Mammary epithelial cell (primary cell): ENCODE measurements at regions of chr17 and their contacts with region 1.

Region 1: GRCh38 chr17:49227436-49228261 is 2.9 kb downstream of the PHOSPHO1 start:
- DNase-seq: peak; percentile 48
- H3K4me3 ChIP-seq: no peak overlapping the region
- H3K27ac ChIP-seq: no peak overlapping the region
- H3K4me1 ChIP-seq: peaks cover 14% of the 10 kb centered on the region
- H3K27me3 ChIP-seq: peaks cover 17% of the 10 kb centered on the region
- CTCF ChIP-seq: peak; percentile 82 to 91

Region 2: DNA sequence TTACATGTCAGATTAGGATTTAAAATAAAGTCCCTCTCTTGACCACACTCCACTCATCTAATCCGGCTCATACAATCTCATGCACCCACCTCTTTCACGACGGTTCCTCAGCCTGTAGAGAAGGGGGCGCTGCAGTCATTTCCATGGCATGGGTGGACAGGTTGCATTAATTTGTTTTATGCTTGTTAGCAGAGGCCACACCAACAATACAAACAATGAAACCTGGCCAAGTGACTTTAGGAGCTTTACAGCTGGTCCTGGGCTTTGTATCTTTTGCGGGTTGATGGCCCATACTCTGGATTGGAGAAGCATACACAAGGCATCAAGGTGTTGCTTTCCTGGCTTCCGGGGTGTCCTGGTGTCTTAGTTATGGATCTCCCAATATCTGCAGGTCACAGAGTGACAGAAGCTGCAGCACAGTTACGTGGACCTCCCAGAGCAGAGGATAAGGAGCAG is 273.3 kb before region 1 on chr17:
- CTCF ChIA-PET with region 1: no interaction called
- dilution Hi-C with region 1: no loop called
- in situ Hi-C with region 1: no loop called
- intact Hi-C with region 1: loop called (anchors 5 kb)
- DNase-seq: no peak
- H3K4me3 ChIP-seq: no peak overlapping the region
- H3K27ac ChIP-seq: no peak overlapping the region
- H3K4me1 ChIP-seq: no peaks in the 10 kb centered on the region
- H3K27me3 ChIP-seq: no peaks in the 10 kb centered on the region
- CTCF ChIP-seq: peak; percentile 42 to 61

Region 3: DNA sequence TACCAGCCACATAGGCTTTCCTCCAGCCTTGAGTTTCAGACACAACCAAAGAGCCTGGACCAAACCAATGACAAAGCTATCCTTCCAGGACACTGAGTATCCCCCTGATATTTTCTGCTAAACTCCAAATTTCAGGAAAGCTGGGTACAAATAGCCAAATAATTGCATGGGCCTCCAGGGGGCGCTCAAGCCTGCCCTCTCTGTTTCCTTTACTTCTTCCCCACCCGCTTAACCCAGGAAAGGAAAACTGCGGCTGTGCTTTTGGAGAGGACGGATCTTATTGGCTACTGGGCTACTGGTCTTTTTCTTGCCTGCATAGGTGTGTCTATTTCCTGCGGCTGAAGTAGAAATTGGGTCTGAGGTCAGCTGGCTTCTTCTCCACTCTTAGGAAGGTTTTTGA is 47.3 kb before region 1 on chr17:
- CTCF ChIA-PET with region 1: no interaction called
- dilution Hi-C with region 1: no loop called
- in situ Hi-C with region 1: no loop called
- intact Hi-C with region 1: loop called (anchors 1 kb)
- DNase-seq: no peak
- H3K4me3 ChIP-seq: no peak overlapping the region
- H3K27ac ChIP-seq: no peak overlapping the region
- H3K4me1 ChIP-seq: no peaks in the 10 kb centered on the region
- H3K27me3 ChIP-seq: no peaks in the 10 kb centered on the region
- CTCF ChIP-seq: peak; percentile 79 to 80

Region 4: GRCh38 chr17:49277638-49278037 is 50.0 kb after region 1 on chr17:
- CTCF ChIA-PET with region 1: no interaction called
- dilution Hi-C with region 1: no loop called
- in situ Hi-C with region 1: no loop called
- intact Hi-C with region 1: loop called (anchors 5 kb)
- DNase-seq: peak; percentile 11
- H3K4me3 ChIP-seq: no peak overlapping the region
- H3K27ac ChIP-seq: no peak overlapping the region
- H3K4me1 ChIP-seq: no peaks in the 10 kb centered on the region
- H3K27me3 ChIP-seq: no peaks in the 10 kb centered on the region
- CTCF ChIP-seq: no peak